ENCODE measurements at regions of chr1 and their contacts with region 1.

Region 1: GRCh38 chr1:73331726-73332125 is 866.2 kb downstream of the LRRIQ3 start:
- DNase-seq: no peak
- H3K4me3 ChIP-seq: no peak overlapping the region
- H3K27ac ChIP-seq: no peak overlapping the region
- H3K4me1 ChIP-seq: no peaks in the 10 kb centered on the region
- H3K27me3 ChIP-seq: no peaks in the 10 kb centered on the region
- CTCF ChIP-seq: no peak

Region 2: DNA sequence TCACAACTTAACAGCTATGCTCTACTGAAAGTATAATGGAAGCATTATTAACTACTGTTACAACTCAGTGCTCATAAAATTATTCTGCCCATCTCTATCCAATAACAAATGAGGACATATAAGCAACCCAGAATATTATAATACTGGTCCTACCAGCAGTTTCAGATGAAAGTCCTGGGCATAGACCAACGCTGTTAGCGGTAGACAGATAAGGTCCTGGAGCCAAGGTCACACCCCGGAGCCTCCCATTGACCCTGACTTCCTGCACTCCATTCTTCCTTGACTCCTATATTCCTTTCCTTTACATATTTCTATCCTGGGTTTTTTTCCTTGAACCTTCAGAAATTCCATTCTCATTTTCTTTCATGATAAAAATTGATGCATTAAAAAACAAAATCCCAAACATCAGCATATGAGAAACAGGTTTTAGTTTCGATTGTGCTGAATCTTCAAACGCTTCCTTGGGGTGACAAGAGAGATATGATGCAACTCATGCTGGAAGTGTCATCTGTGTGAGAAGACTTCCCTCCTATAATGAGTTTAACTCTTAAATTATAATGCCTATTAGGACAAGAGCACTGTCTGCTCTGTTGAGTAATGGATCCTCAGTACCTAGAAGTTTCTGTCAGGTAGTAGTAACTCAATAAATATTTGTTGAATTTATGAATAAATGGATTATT is 35.1 kb after region 1 on chr1:
- intact Hi-C with region 1: loop called (anchors 2 kb)
- DNase-seq: no peak
- H3K4me3 ChIP-seq: no peak overlapping the region
- H3K27ac ChIP-seq: no peak overlapping the region
- H3K4me1 ChIP-seq: no peaks in the 10 kb centered on the region
- H3K27me3 ChIP-seq: no peaks in the 10 kb centered on the region
- CTCF ChIP-seq: no peak

Region 3: GRCh38 chr1:73654714-73655113 is 323.0 kb after region 1 on chr1:
- intact Hi-C with region 1: no loop called
- DNase-seq: no peak
- H3K4me3 ChIP-seq: no peak overlapping the region
- H3K27ac ChIP-seq: no peak overlapping the region
- H3K4me1 ChIP-seq: no peaks in the 10 kb centered on the region
- H3K27me3 ChIP-seq: no peaks in the 10 kb centered on the region
- CTCF ChIP-seq: no peak

Measured in tibial artery (tissue), 4 donors.